SK-N-SH (cell line): ENCODE measurements at regions of chr17 and their contacts with region 1.

Region 1: DNA sequence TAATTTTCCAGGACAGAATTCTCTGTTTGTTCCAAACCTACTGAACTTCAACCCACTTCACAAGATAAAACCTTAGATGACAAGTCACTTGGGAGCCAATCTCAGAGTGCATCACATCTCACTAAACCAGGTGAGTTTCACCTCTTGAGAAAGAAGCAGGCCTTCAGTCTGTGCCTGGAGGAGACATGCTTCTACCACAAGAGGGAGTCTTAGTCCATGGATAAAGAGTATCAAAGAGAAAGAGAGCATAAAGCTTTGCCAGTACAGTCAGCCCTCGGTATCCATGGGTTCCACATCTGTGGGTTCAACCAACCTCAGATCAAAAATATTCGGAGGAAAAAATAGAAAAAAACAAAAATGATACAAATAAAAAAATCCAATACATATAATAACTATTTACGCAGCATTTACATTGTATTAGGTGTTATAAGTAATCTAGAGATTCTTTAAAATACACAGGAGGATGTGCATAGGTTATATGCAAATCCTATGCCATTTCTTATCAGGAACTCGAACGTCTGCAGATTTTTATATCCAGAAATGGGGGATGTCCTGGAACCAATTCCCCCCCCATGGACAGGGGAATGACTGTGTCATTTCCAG is 37.7 kb downstream of the DUSP14 start:
- DNase-seq: peak; percentile 53
- H3K4me3 ChIP-seq: peak overlapping the region in 1 of 2 experiments; percentile 28; a peak in 1 of 4 replicates
- H3K27ac ChIP-seq: no peak overlapping the region
- H3K4me1 ChIP-seq: no peaks in the 10 kb centered on the region
- H3K27me3 ChIP-seq: no peaks in the 10 kb centered on the region
- CTCF ChIP-seq: peak; percentile 78
- EP300 ChIP-seq: no peak
- RAD21 ChIP-seq: peak; percentile 79

Region 2: DNA sequence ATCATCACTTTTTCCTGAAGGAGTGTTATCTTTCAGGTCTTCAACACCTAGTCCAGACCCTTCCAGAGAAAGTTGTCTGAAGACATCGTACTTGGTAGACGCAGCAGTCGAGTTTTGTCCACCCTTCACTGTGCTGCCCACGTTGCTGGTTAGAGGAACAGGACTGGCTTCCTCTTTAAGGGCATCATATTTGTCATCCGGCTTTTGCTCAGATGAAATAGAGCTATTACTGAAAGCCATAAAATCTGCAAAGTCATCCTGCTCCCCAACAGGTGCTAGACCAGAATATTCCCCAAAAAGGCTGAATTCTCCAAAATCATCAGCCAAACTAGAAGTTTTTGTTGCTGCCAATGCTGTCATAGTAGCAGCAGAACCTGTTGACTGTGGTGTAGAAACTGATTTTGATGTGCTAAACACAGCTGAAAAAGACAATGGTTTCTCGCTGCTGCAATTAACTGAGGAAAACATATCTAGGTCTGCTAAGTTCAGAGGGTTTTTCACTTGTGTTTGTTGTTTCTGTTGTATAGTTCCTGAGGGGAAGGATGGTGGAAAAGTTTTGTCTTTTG is 26.1 kb after region 1 on chr17:
- CTCF ChIA-PET with region 1: interaction called, 29 read pairs
- POLR2A ChIA-PET with region 1: no interaction called
- DNase-seq: no peak
- H3K4me3 ChIP-seq: no peak overlapping the region
- H3K27ac ChIP-seq: no peak overlapping the region
- H3K4me1 ChIP-seq: no peaks in the 10 kb centered on the region
- H3K27me3 ChIP-seq: no peaks in the 10 kb centered on the region
- CTCF ChIP-seq: no peak
- EP300 ChIP-seq: no peak
- RAD21 ChIP-seq: no peak

Region 3: DNA sequence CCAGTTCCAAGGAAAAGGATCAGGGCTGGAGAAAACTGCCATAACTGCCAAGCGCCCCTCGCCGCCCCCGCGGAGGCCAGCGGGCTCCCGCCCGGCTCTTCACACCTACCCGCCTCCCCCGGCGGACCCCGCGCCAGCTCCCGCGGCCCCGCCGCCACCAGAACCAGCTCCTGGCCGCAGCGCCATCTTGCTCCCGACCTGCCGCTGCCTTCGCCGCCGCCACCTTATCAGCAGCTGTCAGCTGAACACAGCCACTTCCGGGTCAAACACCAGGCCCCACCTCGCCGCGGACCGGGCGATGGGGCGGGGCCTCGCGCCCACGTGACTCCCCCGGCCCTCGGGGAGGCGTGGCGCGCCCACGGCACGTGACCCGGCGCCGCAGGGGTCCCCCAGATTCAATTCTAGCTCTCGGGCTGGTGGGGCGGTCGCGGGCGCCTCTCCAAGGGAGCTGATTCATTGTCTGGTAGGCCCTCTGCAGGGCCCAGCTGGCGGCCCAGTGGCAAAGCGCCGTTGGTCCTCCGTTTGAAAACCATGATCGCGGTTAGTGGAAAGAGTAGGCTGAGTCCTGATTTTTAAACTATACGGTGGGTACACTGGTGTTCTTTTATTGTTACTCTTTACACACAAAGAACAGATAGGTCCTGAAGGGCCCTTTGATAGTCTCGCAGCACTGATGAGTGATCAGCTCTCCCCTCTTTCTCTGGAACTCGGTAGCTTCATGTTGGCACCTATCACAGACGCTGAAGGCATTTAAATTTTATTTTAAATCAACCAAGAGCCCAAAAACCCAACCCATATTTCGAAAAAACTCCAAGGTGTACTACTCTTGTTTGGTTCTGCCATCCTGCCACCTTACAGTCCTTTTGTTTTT is 82.1 kb after region 1 on chr17 and contains the start of gene SYNRG:
- CTCF ChIA-PET with region 1: interaction called, 14 read pairs
- POLR2A ChIA-PET with region 1: no interaction called
- DNase-seq: peak; percentile 99
- H3K4me3 ChIP-seq: peak within 1 kb of the TSS; percentile 86 to 90
- H3K27ac ChIP-seq: peak within 1 kb of the TSS; percentile 87 to 97
- H3K4me1 ChIP-seq: peaks cover 0 to 10% of the 10 kb centered on the region in 2 experiments; a peak in 3 of 4 replicates
- H3K27me3 ChIP-seq: no peaks in the 10 kb centered on the region
- CTCF ChIP-seq: peak; percentile 32
- EP300 ChIP-seq: peak; percentile 4 to 52; a peak in 1 of 4 replicates
- RAD21 ChIP-seq: peak; percentile 46
- polyA plus RNA-seq, gene SYNRG: 8.9 and 12.0 TPM in 2 replicates